A549 (cell line): ENCODE measurements at regions of chr2 and their contacts with region 1.

Region 1: GRCh38 chr2:20962939-20963557 is 80.8 kb downstream of the APOB start:
- DNase-seq: peak; percentile 45 to 67
- ATAC-seq: peak; percentile 85 to 93
- H3K4me3 ChIP-seq: no peak overlapping the region
- H3K27ac ChIP-seq: no peak overlapping the region
- H3K4me1 ChIP-seq: no peaks in the 10 kb centered on the region
- CTCF ChIP-seq: peak; percentile 93
- EP300 ChIP-seq: no peak
- POLR2A ChIP-seq: no peak
- RAD21 ChIP-seq: peak; percentile 82 to 84

Region 2: DNA sequence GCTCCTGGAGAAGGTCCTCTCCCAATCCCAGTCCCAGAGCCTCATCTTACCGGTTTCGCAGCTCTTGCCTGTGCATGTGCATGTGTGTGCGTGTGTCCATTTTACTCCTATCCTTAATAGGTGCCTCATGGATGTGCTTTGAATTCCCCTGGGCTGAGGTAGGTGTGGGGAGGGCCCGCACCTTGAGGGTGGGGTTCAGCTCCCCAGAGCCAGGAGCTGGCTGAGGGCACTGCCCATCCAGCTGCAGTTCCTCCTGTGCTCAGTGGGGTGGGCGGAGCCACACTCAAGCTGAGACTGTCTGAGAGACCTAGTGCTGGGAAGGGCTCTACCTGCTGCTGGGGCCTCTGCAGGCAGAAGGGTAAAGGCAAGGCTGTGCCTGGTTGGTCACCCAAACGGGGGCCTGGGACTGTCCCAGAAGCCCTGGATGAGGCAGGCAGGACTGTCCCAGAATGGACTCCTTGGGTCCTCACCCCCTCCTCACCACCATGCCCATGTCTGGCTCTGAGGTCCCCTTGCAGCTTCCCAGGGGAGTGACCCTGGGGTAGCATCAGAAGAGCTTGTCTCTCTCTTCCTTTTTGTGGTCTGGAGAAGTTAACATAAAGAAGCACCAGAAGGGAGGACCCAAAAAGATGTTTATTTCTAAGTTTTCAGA is 287.2 kb before region 1 on chr2:
- CTCF ChIA-PET with region 1: interaction called, 47 read pairs
- POLR2A ChIA-PET with region 1: no interaction called
- DNase-seq: peak in 1 of 2 experiments; percentile 41
- ATAC-seq: peak; percentile 80 to 89
- H3K4me3 ChIP-seq: no peak overlapping the region
- H3K27ac ChIP-seq: peak overlapping the region; percentile 33 to 55; a peak in 3 of 6 replicates
- H3K4me1 ChIP-seq: peaks cover 21% of the 10 kb centered on the region
- CTCF ChIP-seq: no peak
- EP300 ChIP-seq: no peak
- POLR2A ChIP-seq: no peak
- RAD21 ChIP-seq: no peak

Region 3: DNA sequence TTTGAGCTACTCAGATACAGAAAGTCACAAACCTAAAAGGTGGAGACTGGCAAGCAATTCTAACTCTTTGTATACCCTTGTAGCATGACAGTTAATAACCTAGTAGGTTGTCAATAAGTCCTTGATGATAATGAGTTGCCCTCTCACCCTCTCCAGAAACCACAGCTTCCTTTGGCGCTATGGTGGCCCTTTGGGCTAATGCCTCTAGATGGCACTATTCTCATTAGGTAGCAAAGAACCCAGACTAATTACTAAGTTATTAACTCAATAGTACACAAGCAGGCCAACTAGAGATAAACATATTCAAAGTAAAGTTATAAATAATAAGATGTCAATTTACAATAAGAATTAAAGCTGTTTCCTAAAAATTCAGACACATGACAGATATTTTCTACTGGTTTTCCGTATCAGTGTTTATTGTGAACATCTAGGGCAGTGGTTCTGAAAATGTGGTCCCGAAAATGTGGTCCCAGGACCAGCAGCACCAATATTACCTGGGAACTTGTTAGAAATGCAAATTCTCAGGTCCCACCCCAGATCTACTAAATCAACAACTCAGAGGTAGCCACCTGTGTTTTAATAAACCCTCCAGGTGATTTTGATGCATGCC is 181.3 kb before region 1 on chr2:
- CTCF ChIA-PET with region 1: interaction called, 33 read pairs
- POLR2A ChIA-PET with region 1: no interaction called
- DNase-seq: peak; percentile 21
- ATAC-seq: peak; percentile 64 to 84; a peak in 4 of 6 replicates
- H3K4me3 ChIP-seq: no peak overlapping the region
- H3K27ac ChIP-seq: no peak overlapping the region
- H3K4me1 ChIP-seq: no peaks in the 10 kb centered on the region
- CTCF ChIP-seq: peak; percentile 79
- EP300 ChIP-seq: no peak
- POLR2A ChIP-seq: no peak
- RAD21 ChIP-seq: peak; percentile 63 to 73

Region 4: DNA sequence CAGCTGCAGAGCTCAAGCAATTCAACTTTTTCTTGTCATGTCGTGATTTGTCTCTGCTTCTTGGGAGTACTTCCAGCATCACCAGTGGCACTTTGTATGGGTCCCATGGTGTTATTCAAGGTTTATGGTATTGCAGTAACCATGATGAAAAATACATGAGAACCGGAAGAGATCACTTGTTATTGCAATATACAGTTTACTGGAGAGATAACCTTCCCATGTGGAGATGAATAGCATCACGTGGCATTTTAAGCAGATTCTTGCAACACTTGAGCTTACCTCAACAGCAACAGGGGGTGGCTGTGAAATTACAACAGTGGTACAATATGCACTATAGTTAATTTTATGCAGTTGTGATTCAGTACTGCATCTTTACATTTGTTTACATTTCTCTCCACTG is 16.6 kb before region 1 on chr2:
- CTCF ChIA-PET with region 1: interaction called, 12 read pairs
- POLR2A ChIA-PET with region 1: no interaction called
- DNase-seq: no peak
- ATAC-seq: no peak
- H3K4me3 ChIP-seq: no peak overlapping the region
- H3K27ac ChIP-seq: no peak overlapping the region
- H3K4me1 ChIP-seq: no peaks in the 10 kb centered on the region
- CTCF ChIP-seq: no peak
- EP300 ChIP-seq: no peak
- POLR2A ChIP-seq: no peak
- RAD21 ChIP-seq: no peak

Region 5: DNA sequence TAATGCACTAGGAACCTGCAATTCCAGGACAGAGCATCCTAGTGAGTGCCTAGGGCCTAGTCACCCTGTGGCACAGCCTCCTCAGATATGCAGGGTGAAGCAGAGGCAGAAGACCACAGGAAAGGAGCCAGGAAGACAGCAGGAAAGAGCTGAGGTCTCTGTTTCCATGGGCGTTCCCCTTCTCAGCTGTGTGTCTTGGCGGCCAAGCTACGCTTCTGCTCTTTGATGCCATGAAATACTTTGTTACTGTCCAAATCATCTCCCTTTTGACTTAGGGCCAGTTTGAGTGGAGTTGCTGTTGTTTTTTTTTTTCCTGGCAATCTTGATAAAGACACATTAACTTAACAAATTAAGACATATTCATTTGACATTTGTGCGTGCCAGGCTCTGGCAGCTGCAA is 13.5 kb after region 1 on chr2:
- CTCF ChIA-PET with region 1: interaction called, 48 read pairs
- POLR2A ChIA-PET with region 1: no interaction called
- DNase-seq: no peak
- ATAC-seq: no peak
- H3K4me3 ChIP-seq: no peak overlapping the region
- H3K27ac ChIP-seq: no peak overlapping the region
- H3K4me1 ChIP-seq: no peaks in the 10 kb centered on the region
- CTCF ChIP-seq: no peak
- EP300 ChIP-seq: no peak
- POLR2A ChIP-seq: no peak
- RAD21 ChIP-seq: no peak